Dorsolateral prefrontal cortex (tissue), 120 donors: ENCODE measurements at regions of chr3 and their contacts with region 1.

Region 1: GRCh38 chr3:179973931-179974361 is 62.8 kb downstream of the PEX5L start:
- DNase-seq: peak in 8 of 10 donors; percentile 35 to 70 (median 58)
- H3K4me3 ChIP-seq: peak overlapping the region; percentile 11 to 74 (median 53)
- H3K27ac ChIP-seq: peak overlapping the region in 58 of 59 donors; percentile 73 to 100 (median 94)
- H3K27me3 ChIP-seq: no peaks in the 10 kb centered on the region
- CTCF ChIP-seq: peak in 2 of 56 donors; percentile 5 to 10

Region 2: DNA sequence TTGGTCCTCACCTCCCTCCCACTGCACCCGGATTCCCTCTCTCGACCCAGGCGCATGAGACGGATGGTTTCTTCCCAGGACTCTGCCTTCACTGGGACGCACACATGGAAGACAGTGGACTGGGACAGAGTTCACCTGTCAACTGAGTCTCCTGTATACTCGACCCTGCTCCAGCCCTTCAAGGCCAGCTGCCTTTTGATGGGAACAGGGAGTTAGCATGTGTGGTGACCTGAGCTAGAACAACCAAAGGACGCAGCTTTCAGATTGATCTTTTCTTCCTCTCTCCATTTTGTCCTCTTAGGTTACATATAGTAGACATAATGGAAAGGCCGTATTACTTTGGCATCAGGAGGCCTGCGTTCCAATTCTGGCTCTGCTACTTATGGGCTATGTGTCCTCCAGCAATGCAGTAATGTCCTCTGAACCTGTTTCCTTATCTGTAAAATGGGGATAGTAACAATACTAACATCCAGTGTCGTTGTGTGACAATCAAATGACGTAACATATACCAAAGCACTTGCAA is 31.3 kb before region 1 on chr3:
- intact Hi-C with region 1: loop called (anchors 2 to 5 kb)
- DNase-seq: no peak
- H3K4me3 ChIP-seq: peak overlapping the region; percentile 7 to 68 (median 43)
- H3K27ac ChIP-seq: peak overlapping the region; percentile 70 to 97 (median 89)
- H3K27me3 ChIP-seq: no peaks in the 10 kb centered on the region
- CTCF ChIP-seq: peak in 2 of 56 donors; percentile 0 to 1

Region 3: GRCh38 chr3:180036671-180037455 is 62.9 kb after region 1 on chr3 and contains the start of gene PEX5L:
- intact Hi-C with region 1: no loop called
- DNase-seq: peak; percentile 23 to 84 (median 71)
- H3K4me3 ChIP-seq: peak within 1 kb of the TSS; percentile 45 to 93 (median 71)
- H3K27ac ChIP-seq: peak within 1 kb of the TSS in 57 of 59 donors; percentile 23 to 89 (median 73)
- H3K27me3 ChIP-seq: peaks cover 0 to 6% (median 0%) of the 10 kb centered on the region in 45 donors
- CTCF ChIP-seq: peak in 25 of 56 donors; percentile 5 to 49 (median 22)
- total RNA-seq, gene PEX5L: 144 to 392 (median 245) TPM